Activated CD4-positive, alpha-beta T cell treated with anti-CD3 and anti-CD28 coated beads for 36 hours (primary cell): ENCODE measurements at regions of chr13 and their contacts with region 1.

Region 1: DNA sequence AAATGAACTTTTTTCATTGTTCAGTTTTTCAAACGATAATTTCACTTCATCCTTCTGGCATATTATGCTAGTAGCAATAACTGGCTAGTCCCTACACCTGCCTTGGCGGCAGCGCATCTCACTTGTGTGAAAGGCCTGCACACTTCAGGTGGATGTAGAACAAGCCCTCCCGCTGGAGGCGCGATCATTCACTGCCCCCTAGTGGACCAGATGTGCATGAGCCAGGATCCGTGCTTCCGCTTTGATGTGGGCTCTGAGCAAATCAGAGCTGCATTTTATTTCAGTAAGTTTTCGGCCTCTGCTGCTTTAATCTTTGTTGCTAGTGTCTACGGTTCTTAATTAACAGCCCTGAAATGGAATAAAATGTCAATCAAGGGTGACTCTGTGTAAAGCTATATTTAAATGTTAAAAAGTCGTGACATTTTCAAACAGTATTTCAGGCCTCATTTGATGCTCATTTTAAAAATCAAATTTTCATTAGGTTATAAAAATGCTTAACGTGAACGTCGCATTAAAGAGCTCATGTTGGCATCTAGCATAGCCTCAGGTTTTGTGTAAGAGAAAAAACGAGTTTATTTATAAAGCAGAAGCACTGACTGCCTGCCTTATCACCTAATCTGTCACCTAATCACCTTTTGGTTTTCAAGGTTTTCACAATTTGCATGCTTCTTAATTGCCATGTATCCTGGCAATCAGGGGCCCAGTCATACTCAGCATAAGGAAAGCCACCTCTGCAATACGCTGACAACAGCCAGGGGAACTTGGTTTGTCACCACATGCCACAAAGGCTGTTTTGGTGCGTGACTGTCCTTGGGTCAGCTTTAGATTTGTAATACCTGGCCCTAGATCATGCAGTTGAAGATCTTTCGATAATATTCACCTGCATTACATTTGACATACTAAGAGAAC is 112.2 kb downstream of the TEX26 start:
- DNase-seq: peak; percentile 91
- ATAC-seq: peak; percentile 69
- H3K4me3 Mint-ChIP-seq: peak overlapping the region; percentile 28
- H3K27ac Mint-ChIP-seq: peak overlapping the region; percentile 89
- H3K4me1 Mint-ChIP-seq: peaks cover 46% of the 10 kb centered on the region
- H3K27me3 Mint-ChIP-seq: peaks cover 6% of the 10 kb centered on the region

Region 2: GRCh38 chr13:30371649-30372265 is 672.9 kb before region 1 on chr13:
- CTCF ChIA-PET with region 1: interaction called, 3 read pairs
- POLR2A ChIA-PET with region 1: no interaction called
- intact Hi-C with region 1: loop called in 1 of 2 experiments (anchors 10 kb)
- DNase-seq: peak; percentile 81
- ATAC-seq: peak; percentile 67
- H3K4me3 Mint-ChIP-seq: peak overlapping the region; percentile 59
- H3K27ac Mint-ChIP-seq: peak overlapping the region; percentile 69
- H3K4me1 Mint-ChIP-seq: peaks cover 75% of the 10 kb centered on the region
- H3K27me3 Mint-ChIP-seq: no peaks in the 10 kb centered on the region

Region 3: DNA sequence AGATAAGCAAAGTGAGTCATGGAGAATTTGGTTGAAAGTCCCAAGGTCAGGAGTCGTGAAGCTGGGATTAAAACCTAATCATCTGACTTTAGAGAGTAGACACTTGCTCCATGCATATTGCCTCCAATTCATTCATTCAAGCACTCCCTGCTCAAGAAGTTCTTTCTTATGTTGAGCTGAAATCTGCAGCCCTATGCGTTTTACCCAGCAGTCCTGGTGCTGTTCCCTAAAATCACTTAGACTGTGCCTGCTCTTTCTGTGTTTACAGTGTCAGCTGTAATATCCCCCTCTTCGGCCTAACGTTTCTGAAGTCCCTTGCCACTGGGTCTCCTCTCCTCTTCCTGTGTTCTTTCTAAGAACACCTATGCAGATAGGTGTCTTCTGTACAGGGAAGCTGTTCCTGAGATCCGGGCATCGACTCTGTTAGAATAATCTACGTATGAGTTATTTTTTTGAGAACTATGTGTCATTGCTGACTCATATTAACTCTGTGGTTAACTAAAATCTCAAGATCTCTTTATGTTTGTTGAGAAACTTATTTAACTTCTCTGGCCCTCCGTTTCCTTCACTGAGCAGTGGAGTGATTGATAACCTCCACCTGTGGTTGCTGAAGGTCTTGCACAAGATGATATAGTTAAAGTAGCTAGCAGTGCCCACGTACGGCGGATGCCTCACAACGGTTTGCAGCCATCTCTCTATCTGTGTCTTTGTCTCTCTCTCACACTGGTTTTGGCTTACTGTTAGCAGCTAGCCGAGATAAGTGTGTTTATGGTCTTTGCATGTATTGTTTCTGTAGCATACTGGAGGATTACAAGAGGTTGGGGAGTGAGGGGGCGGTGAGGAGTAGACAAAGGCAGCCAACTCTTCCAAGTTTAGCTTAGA is 304.6 kb before region 1 on chr13:
- CTCF ChIA-PET with region 1: interaction called, 6 read pairs
- POLR2A ChIA-PET with region 1: interaction called, 3 read pairs
- intact Hi-C with region 1: loop called (anchors 1 to 2 kb)
- DNase-seq: peak; percentile 83
- ATAC-seq: peak; percentile 76
- H3K4me3 Mint-ChIP-seq: peak overlapping the region; percentile 68
- H3K27ac Mint-ChIP-seq: peak overlapping the region; percentile 87
- H3K4me1 Mint-ChIP-seq: peaks cover 81% of the 10 kb centered on the region
- H3K27me3 Mint-ChIP-seq: peaks cover 2% of the 10 kb centered on the region

Region 4: DNA sequence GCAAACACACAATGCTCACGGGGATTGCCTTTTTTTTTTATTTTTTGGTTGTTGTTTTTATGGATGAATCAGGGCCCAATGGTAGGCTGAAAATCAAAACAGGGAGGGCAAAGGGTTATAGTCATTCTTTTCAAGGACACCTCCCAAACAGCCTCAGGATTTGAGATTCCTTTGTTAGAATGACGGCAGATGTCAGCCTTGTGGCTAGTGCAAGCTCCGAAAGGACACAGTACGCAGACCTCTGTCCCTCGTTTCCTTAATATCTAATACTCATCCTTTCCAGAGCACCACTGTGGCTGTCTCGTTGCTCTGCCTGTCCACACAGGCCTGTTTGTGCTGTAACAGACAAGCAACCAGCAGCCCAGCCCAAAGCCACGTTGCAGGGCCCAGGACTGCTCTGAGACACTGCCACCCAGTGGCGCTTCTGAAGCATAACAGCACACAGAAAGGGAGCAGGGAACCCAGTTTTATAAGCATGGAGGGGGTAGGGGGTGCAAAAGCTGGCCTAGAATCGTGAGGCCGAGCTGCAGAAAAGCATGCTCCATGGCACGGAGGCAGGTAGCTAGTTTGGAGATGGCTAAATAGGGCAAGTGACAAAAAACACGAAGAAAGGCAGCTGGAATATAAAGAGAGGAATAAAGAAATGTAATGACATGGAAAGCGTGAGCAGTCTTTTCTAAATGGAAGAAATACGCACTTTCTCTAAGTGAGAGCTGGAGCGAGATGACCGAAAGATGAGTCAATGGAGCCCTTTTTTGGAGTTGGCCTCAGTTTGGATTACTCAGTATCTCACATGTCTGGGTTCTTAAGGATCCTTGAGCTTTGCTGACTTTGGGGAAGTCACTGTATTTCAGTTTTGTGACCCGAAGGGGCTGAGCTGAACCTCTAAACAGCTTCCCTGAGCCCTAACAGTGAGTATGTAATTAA is 179.2 kb before region 1 on chr13:
- CTCF ChIA-PET with region 1: interaction called, 3 read pairs
- POLR2A ChIA-PET with region 1: no interaction called
- intact Hi-C with region 1: loop called (anchors 1 kb)
- DNase-seq: peak; percentile 82
- ATAC-seq: peak; percentile 95
- H3K4me3 Mint-ChIP-seq: no peak overlapping the region
- H3K27ac Mint-ChIP-seq: no peak overlapping the region
- H3K4me1 Mint-ChIP-seq: peaks cover 8% of the 10 kb centered on the region
- H3K27me3 Mint-ChIP-seq: peaks cover 5% of the 10 kb centered on the region

Region 5: GRCh38 chr13:31073859-31074718 is 29.5 kb after region 1 on chr13:
- CTCF ChIA-PET with region 1: interaction called, 9 read pairs
- POLR2A ChIA-PET with region 1: interaction called, 18 read pairs
- intact Hi-C with region 1: loop called (anchors 1 kb)
- DNase-seq: peak; percentile 76
- ATAC-seq: peak; percentile 89
- H3K4me3 Mint-ChIP-seq: no peak overlapping the region
- H3K27ac Mint-ChIP-seq: no peak overlapping the region
- H3K4me1 Mint-ChIP-seq: peaks cover 14% of the 10 kb centered on the region
- H3K27me3 Mint-ChIP-seq: peaks cover 13% of the 10 kb centered on the region

Region 6: DNA sequence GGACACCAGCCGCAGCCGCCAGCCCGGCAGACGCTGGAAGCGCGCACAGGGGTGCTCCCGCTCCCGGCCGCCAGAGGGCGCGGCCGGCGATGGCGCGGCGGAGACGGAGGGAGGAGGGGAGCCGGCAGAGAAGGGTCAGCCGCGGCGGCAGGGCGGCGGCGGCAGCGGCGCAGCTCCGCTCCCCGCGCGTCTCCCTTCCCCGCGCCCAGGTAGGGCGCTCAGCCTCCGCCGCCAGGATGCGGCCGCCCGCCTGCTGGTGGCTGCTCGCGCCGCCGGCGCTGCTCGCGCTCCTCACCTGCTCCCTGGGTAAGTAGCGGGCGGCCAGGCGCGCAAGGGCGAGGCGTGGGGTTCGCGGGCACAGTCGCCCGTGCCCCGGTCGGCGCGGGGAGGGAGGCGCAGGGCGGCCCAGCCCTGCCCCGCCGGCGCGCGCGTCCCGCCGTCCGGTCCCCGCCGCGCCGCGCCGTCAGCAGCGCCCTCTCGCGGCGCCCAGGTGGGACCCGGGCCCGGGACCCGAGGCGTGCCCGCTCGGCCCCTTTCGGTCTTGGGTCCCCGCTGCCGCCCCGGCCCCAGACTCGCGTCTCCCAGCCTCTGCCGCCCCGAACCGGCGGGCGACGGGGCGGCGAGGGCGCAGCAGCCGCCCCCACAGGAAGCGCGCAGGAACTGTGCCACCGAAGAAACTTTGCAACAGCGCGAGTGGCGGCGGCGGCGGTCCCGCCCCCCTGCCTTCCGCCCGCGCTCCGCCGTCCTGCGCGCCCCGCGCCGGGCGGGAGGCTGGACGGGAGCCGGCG is 155.4 kb after region 1 on chr13 and contains the start of gene B3GLCT:
- CTCF ChIA-PET with region 1: interaction called, 4 read pairs
- POLR2A ChIA-PET with region 1: no interaction called
- intact Hi-C with region 1: loop called in 1 of 2 experiments (anchors 1 kb)
- DNase-seq: peak; percentile 87
- ATAC-seq: peak; percentile 81
- H3K4me3 Mint-ChIP-seq: peak within 1 kb of the TSS; percentile 71
- H3K27ac Mint-ChIP-seq: peak within 1 kb of the TSS; percentile 58
- H3K4me1 Mint-ChIP-seq: peaks cover 34% of the 10 kb centered on the region
- H3K27me3 Mint-ChIP-seq: no peaks in the 10 kb centered on the region
- total RNA-seq, gene B3GLCT: 2.1 to 2.4 TPM